PC-9 (cell line): ENCODE measurements at regions of chr6 and their contacts with region 1.

Region 1: GRCh38 chr6:45714741-45715507 is 300.7 kb downstream of the CLIC5 start:
- DNase-seq: peak; percentile 52 to 75
- H3K4me3 ChIP-seq: no peak overlapping the region
- H3K27ac ChIP-seq: no peak overlapping the region
- H3K4me1 ChIP-seq: peaks cover 25% of the 10 kb centered on the region
- H3K27me3 ChIP-seq: no peaks in the 10 kb centered on the region
- CTCF ChIP-seq: peak; percentile 85

Region 2: GRCh38 chr6:44630125-44631028 is 1084.5 kb before region 1 on chr6:
- CTCF ChIA-PET with region 1: interaction called, 9 read pairs
- POLR2A ChIA-PET with region 1: no interaction called
- intact Hi-C with region 1: loop called (anchors 1 kb)
- DNase-seq: peak in 1 of 2 experiments; percentile 57
- H3K4me3 ChIP-seq: no peak overlapping the region
- H3K27ac ChIP-seq: no peak overlapping the region
- H3K4me1 ChIP-seq: no peaks in the 10 kb centered on the region
- H3K27me3 ChIP-seq: no peaks in the 10 kb centered on the region
- CTCF ChIP-seq: peak; percentile 74

Region 3: GRCh38 chr6:45504947-45505346 is 210.0 kb before region 1 on chr6:
- CTCF ChIA-PET with region 1: interaction called, 4 read pairs
- POLR2A ChIA-PET with region 1: no interaction called
- intact Hi-C with region 1: loop called (anchors 5 kb)
- DNase-seq: peak in 1 of 2 experiments; percentile 56
- H3K4me3 ChIP-seq: no peak overlapping the region
- H3K27ac ChIP-seq: no peak overlapping the region
- H3K4me1 ChIP-seq: peaks cover 32% of the 10 kb centered on the region
- H3K27me3 ChIP-seq: no peaks in the 10 kb centered on the region
- CTCF ChIP-seq: no peak

Region 4: DNA sequence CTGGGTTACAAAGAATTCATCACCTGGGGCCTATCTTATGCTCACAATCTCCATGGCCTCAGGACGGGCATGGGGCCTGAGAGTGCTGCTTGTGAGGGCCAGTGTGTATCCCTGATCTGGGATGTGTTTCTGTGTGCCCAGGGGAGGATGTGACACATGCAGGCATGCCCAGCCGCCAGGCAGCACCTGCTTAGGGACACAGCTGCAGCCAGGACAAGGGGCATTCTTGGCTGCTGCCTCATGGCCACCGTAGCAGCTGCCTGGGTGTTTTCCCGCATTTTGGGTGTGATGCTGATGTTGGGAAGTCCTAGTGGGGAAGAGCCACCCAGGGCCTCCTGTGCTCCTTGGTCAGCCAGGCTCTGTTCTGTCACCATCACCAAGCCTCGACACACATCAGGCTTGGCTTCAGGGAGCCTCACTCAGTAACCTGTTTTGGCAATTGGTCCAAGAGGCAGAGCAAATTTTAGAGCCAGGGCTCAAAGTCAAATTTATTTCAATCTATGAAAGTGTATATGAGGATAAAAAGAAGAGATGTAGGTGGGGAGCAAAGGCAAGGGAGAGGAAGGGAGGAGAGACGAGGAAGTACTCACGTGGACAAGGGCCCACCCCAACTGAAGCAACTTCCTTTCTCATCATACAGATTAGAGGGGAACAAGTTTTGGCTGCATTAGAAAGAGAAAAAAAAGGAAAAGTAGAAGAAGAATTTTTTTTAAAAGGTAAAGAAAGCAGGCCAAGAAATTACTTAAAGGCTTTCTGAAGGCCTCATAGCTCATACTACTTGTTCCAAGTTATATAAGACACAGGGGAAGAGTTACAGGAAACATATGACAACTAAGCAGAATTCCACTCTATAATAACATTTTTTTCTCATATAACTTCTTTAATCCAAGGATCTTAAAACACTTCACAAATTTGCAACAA is 67.3 kb before region 1 on chr6:
- CTCF ChIA-PET with region 1: interaction called, 16 read pairs
- POLR2A ChIA-PET with region 1: no interaction called
- intact Hi-C with region 1: no loop called
- DNase-seq: peak; percentile 14 to 52
- H3K4me3 ChIP-seq: no peak overlapping the region
- H3K27ac ChIP-seq: no peak overlapping the region
- H3K4me1 ChIP-seq: peaks cover 21% of the 10 kb centered on the region
- H3K27me3 ChIP-seq: no peaks in the 10 kb centered on the region
- CTCF ChIP-seq: no peak

Region 5: GRCh38 chr6:45902984-45903383 is 188.1 kb after region 1 on chr6:
- CTCF ChIA-PET with region 1: no interaction called
- POLR2A ChIA-PET with region 1: no interaction called
- intact Hi-C with region 1: no loop called
- DNase-seq: no peak
- H3K4me3 ChIP-seq: no peak overlapping the region
- H3K27ac ChIP-seq: no peak overlapping the region
- H3K4me1 ChIP-seq: no peaks in the 10 kb centered on the region
- H3K27me3 ChIP-seq: no peaks in the 10 kb centered on the region
- CTCF ChIP-seq: no peak

Region 6: GRCh38 chr6:45922728-45923351 is 207.9 kb after region 1 on chr6:
- CTCF ChIA-PET with region 1: interaction called, 12 read pairs
- POLR2A ChIA-PET with region 1: no interaction called
- intact Hi-C with region 1: loop called (anchors 5 kb)
- DNase-seq: peak; percentile 41 to 64
- H3K4me3 ChIP-seq: no peak overlapping the region
- H3K27ac ChIP-seq: no peak overlapping the region
- H3K4me1 ChIP-seq: 0 out of 2 replicates have a peak, but pooled peaks cover 3% of the 10 kb centered on the region
- H3K27me3 ChIP-seq: no peaks in the 10 kb centered on the region
- CTCF ChIP-seq: peak; percentile 84